Ovary (tissue), 10 donors: ENCODE measurements at regions of chr4 and their contacts with region 1.

Region 1: GRCh38 chr4:72701987-72702819 is 133.2 kb upstream of the ADAMTS3 start:
- DNase-seq: peak in 2 of 5 donors; percentile 29 to 42
- H3K4me3 ChIP-seq: peak overlapping the region; percentile 23
- H3K27ac ChIP-seq: no peak overlapping the region
- H3K4me1 ChIP-seq: no peaks in the 10 kb centered on the region
- H3K27me3 ChIP-seq: no peaks in the 10 kb centered on the region
- CTCF ChIP-seq: peak; percentile 29 to 62 (median 30)
- EP300 ChIP-seq: no peak
- POLR2A ChIP-seq: no peak

Region 2: DNA sequence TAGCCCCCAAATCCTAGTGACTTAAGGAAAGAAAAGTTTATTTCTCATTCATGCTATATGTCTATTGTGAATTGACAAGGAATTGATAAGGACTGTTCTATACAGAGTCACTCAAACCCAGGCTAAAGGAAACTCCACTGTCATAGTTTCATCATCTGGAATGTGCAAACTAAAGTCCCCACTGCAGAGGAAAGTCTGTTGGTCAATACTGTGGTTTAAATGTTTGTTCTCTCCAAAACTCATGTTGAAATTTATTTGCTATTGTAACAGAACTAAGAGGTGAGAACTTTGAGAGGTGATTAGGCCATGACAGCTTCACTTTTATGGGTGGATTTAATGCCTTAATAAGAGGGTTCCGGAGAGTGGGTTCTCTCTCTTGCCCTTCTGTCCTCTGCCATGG is 217.7 kb after region 1 on chr4:
- intact Hi-C with region 1: loop called in 1 of 4 experiments (anchors 10 kb)
- DNase-seq: no peak
- H3K4me3 ChIP-seq: no peak overlapping the region
- H3K27ac ChIP-seq: no peak overlapping the region
- H3K4me1 ChIP-seq: no peaks in the 10 kb centered on the region
- H3K27me3 ChIP-seq: no peaks in the 10 kb centered on the region
- CTCF ChIP-seq: no peak
- EP300 ChIP-seq: no peak
- POLR2A ChIP-seq: no peak